Endothelial cell of umbilical vein (primary cell): ENCODE measurements at regions of chr9 and their contacts with region 1.

Region 1: DNA sequence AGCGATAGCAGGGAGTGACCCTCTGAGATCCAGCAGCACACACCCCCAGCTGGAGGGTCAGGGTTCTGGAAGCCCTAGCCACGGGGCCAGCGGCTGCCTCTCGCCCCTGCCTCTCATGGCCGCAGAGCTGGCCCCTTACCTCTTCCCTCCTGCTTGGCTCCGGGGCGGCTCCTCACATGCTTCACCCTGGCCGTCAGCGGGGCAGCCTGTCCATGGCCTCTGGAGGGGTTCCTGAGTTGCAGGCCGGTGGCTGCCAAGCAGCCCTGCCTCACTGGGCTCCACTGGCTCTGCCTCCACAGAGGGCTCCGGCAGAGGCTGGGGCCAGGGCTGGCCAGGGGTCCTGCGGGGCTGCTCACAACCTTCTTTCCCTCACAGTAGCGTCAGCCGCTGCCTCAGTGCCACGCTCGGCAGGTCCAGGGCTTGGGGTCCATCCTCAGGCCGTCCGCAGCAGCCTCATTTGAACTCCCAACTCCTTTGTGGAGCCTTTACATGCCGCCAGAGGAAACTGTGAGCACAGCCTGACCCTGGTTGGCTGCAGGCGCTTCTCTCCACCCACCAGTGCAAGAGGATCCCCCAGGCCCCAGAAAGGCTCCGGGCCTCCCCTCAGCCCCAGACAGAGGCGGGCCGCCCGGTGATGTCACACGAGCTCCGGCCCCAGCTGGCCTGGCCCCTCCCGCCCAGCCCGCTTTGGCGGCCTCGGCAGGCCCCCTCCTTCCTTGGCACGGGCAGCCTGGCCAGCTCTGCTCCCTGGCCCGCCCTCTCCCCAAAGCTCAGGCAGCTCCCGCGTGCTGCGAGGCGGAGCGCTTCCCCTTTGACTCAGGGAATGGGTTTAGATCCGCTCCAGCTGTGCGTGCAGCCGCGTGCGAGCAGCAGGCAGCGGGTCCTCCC is at the start of gene ANGPTL2:
- DNase-seq: peak; percentile 94
- H3K4me3 ChIP-seq: peak within 1 kb of the TSS; percentile 30 to 64 (median 53)
- H3K27ac ChIP-seq: peak within 1 kb of the TSS; percentile 70
- H3K4me1 ChIP-seq: peaks cover 16% of the 10 kb centered on the region
- H3K27me3 ChIP-seq: peaks cover 1 to 2% of the 10 kb centered on the region in 2 experiments
- CTCF ChIP-seq: peak in 1 of 2 donors; percentile 5
- POLR2A ChIP-seq: peak; percentile 70
- total RNA-seq, gene ANGPTL2: 21.8 and 24.5 TPM in 2 replicates

Region 2: GRCh38 chr9:126965541-126966428 is 156.6 kb before region 1 on chr9:
- CTCF ChIA-PET with region 1: interaction called, 11 read pairs
- POLR2A ChIA-PET with region 1: no interaction called
- dilution Hi-C with region 1: no loop called
- intact Hi-C with region 1: loop called (anchors 1 kb)
- DNase-seq: peak; percentile 82
- H3K4me3 ChIP-seq: no peak overlapping the region
- H3K27ac ChIP-seq: no peak overlapping the region
- H3K4me1 ChIP-seq: peaks cover 1% of the 10 kb centered on the region
- H3K27me3 ChIP-seq: no peaks in the 10 kb centered on the region
- CTCF ChIP-seq: peak; percentile 81 to 88
- POLR2A ChIP-seq: no peak

Region 3: GRCh38 chr9:127163409-127163808 is 41.0 kb after region 1 on chr9:
- CTCF ChIA-PET with region 1: interaction called, 5 read pairs
- POLR2A ChIA-PET with region 1: no interaction called
- dilution Hi-C with region 1: no loop called
- intact Hi-C with region 1: loop called (anchors 1 kb)
- DNase-seq: peak; percentile 96
- H3K4me3 ChIP-seq: no peak overlapping the region
- H3K27ac ChIP-seq: peak overlapping the region; percentile 68
- H3K4me1 ChIP-seq: peaks cover 17% of the 10 kb centered on the region
- H3K27me3 ChIP-seq: no peaks in the 10 kb centered on the region
- CTCF ChIP-seq: no peak
- POLR2A ChIP-seq: no peak

Region 4: DNA sequence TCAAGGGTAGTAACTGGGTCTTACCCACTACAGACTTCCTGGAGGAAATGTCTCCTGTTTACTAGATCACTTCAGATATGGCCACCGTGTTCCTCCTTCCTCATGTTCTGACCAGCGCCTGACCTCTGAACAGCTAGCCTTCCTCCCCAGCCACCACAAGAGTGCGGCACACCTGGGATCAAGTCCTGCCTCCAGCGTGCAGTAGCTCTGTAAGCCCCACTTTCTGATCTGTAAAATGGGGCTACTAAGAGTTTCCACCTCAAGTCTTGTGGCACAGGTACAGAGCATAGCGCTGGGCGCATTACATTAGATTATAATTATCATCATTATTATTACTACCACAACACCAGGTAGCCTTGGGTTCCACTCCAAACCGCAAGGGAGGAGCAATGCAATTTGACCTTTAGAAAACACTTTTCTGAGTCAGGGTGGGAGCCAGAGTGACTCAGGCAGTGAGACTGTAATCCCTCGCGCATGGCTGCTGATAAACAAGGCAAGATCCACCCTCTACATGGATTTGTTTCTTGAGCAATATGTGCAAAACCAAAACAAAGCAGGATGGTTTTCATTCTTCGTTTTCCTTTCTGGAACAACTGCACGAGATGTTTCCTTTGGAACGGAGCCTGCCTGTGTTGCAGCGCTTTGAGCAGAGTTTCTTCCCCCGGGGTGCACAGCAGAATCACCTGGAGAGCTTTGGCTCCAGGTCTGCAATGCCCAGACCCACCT is 65.0 kb after region 1 on chr9:
- CTCF ChIA-PET with region 1: interaction called, 4 read pairs
- POLR2A ChIA-PET with region 1: interaction called, 3 read pairs
- dilution Hi-C with region 1: no loop called
- intact Hi-C with region 1: loop called (anchors 1 kb)
- DNase-seq: peak; percentile 95
- H3K4me3 ChIP-seq: no peak overlapping the region
- H3K27ac ChIP-seq: peak overlapping the region; percentile 84
- H3K4me1 ChIP-seq: peaks cover 22% of the 10 kb centered on the region
- H3K27me3 ChIP-seq: no peaks in the 10 kb centered on the region
- CTCF ChIP-seq: no peak
- POLR2A ChIP-seq: no peak

Region 5: GRCh38 chr9:127199001-127199791 is 76.8 kb after region 1 on chr9:
- CTCF ChIA-PET with region 1: interaction called, 28 read pairs
- POLR2A ChIA-PET with region 1: no interaction called
- dilution Hi-C with region 1: no loop called
- intact Hi-C with region 1: loop called (anchors 1 kb)
- DNase-seq: peak; percentile 81
- H3K4me3 ChIP-seq: no peak overlapping the region
- H3K27ac ChIP-seq: no peak overlapping the region
- H3K4me1 ChIP-seq: no peaks in the 10 kb centered on the region
- H3K27me3 ChIP-seq: no peaks in the 10 kb centered on the region
- CTCF ChIP-seq: peak; percentile 82 to 89
- POLR2A ChIP-seq: no peak